Mammary epithelial cell (primary cell): ENCODE measurements at regions of chr14 and their contacts with region 1.

Region 1: GRCh38 chr14:93708311-93708734 is 80.0 kb downstream of the PRIMA1 start:
- DNase-seq: no peak
- H3K4me3 ChIP-seq: no peak overlapping the region
- H3K27ac ChIP-seq: no peak overlapping the region
- H3K4me1 ChIP-seq: peaks cover 3% of the 10 kb centered on the region
- H3K27me3 ChIP-seq: no peaks in the 10 kb centered on the region
- CTCF ChIP-seq: no peak

Region 2: DNA sequence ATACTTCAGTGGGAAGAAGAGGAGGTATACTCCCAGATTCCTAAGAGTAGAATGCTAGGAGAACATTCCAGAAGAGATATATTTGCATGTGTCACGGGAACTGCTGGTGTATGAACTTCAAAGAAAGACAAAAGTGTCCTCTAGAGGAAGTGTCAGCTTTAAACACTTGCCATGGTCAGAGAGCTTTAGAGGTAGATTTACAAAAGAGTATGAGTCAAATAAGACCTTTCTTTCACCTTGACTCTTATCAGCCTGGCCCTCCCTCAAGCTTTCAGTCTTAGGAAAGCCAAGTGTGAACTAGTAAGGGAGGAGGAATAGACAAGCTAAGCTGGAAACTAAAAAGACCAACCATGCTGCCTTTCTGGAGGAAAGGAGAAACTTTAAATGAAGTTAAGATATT is 326.7 kb before region 1 on chr14:
- CTCF ChIA-PET with region 1: no interaction called
- dilution Hi-C with region 1: no loop called
- in situ Hi-C with region 1: no loop called
- intact Hi-C with region 1: no loop called
- DNase-seq: no peak
- H3K4me3 ChIP-seq: no peak overlapping the region
- H3K27ac ChIP-seq: no peak overlapping the region
- H3K4me1 ChIP-seq: no peaks in the 10 kb centered on the region
- H3K27me3 ChIP-seq: peaks cover 6% of the 10 kb centered on the region
- CTCF ChIP-seq: no peak

Region 3: DNA sequence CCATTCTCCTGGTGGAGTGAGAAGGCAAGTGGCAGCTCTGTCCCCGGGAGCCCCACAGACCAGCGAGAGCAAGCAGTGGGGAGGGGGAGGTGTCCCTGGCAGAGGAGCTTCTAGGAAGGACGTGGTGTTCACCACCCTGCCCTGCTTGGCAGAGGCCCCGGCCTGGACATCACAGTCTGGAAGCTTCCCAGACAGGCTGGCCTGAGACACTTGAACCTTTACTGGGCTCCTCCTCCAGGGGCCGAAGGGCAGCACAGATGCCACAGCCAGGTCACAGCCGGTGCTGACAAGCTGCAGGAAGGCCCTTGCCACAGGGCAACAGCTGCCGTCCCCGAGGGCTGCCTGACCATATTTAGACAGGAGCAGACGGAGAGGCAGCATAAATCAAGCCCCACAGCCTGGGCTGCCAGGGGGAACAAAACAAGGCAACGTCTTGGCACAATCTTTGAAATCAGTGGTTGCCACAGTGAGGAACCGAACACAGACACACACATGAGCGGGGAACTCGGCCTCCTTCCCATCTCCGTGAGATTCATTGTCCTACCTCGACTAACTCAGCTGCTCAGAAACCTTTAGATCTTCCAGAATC is 51.5 kb after region 1 on chr14:
- CTCF ChIA-PET with region 1: no interaction called
- dilution Hi-C with region 1: loop called (anchors 10 kb)
- in situ Hi-C with region 1: no loop called
- intact Hi-C with region 1: no loop called
- DNase-seq: no peak
- H3K4me3 ChIP-seq: no peak overlapping the region
- H3K27ac ChIP-seq: no peak overlapping the region
- H3K4me1 ChIP-seq: no peaks in the 10 kb centered on the region
- H3K27me3 ChIP-seq: no peaks in the 10 kb centered on the region
- CTCF ChIP-seq: no peak

Region 4: GRCh38 chr14:93847473-93847872 is 139.2 kb after region 1 on chr14:
- CTCF ChIA-PET with region 1: no interaction called
- dilution Hi-C with region 1: loop called (anchors 5 kb)
- in situ Hi-C with region 1: no loop called
- intact Hi-C with region 1: no loop called
- DNase-seq: no peak
- H3K4me3 ChIP-seq: no peak overlapping the region
- H3K27ac ChIP-seq: no peak overlapping the region
- H3K4me1 ChIP-seq: no peaks in the 10 kb centered on the region
- H3K27me3 ChIP-seq: no peaks in the 10 kb centered on the region
- CTCF ChIP-seq: no peak

Region 5: DNA sequence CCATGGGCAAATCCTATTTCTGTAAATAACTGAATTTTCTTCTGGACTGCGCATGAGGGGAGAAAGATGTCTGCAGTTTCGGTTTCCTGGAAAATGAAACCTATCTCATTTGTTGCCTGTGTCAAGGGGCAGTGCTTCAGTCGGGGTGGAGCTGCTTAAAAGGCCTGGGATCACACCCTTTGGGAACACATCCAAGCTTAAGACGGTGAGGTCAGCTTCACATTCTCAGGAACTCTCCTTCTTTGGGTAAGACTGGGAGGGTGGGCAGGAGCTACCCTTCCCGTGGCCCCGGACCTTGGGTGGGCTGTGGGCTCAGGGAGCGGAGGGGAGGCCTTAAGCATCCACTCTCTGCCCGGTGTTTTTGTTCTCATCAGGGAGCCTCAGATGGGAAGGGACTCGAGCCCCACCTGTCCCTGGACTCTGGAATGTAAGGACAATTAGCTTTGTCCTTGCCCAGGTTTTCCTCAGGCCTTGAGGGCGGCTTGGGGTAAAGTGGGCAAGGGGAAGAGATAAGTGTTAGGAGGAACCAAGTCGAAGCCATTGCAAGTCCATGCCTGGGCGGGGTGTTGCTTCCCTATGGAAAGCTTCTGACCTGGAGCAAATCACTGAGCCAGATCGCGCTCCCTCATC is 402.3 kb after region 1 on chr14 and contains the start of gene IFI27:
- CTCF ChIA-PET with region 1: no interaction called
- dilution Hi-C with region 1: no loop called
- in situ Hi-C with region 1: no loop called
- intact Hi-C with region 1: no loop called
- DNase-seq: no peak
- H3K4me3 ChIP-seq: no peak within 1 kb of the TSS
- H3K27ac ChIP-seq: no peak within 1 kb of the TSS
- H3K4me1 ChIP-seq: peaks cover 3% of the 10 kb centered on the region
- H3K27me3 ChIP-seq: no peaks in the 10 kb centered on the region
- CTCF ChIP-seq: no peak
- total RNA-seq, gene IFI27: 0.83 to 1.3 TPM